ENCODE measurements at regions of chr17 and their contacts with region 1.

Region 1: GRCh38 chr17:29807520-29808351 is 122.3 kb downstream of the SSH2 start:
- DNase-seq: no peak
- H3K4me3 ChIP-seq: no peak overlapping the region
- H3K27ac ChIP-seq: no peak overlapping the region
- H3K4me1 ChIP-seq: no peaks in the 10 kb centered on the region
- H3K27me3 ChIP-seq: no peaks in the 10 kb centered on the region
- CTCF ChIP-seq: peak; percentile 48 to 82 (median 76)
- POLR2A ChIP-seq: no peak

Region 2: DNA sequence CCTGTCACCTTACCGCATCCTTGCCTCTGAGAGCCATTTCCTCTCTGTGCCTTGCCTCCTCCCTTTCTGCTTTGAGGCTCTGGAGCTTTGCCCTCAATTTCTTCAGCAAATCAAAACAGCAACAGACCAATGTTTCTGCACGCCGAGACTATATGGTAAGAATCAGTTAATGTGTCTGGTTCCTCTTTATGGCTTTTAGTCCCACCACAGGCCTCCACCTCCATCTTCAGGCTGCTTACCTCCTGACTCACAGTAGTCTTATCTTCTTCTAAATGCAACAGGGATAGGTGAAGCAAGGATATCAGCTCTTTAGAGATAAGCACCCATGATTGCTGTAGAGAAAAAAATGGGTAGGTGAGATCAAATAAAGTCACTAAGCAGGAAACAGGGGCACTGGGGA is 1221.9 kb before region 1 on chr17:
- intact Hi-C with region 1: no loop called
- DNase-seq: no peak
- H3K4me3 ChIP-seq: no peak overlapping the region
- H3K27ac ChIP-seq: no peak overlapping the region
- H3K4me1 ChIP-seq: no peaks in the 10 kb centered on the region
- H3K27me3 ChIP-seq: no peaks in the 10 kb centered on the region
- CTCF ChIP-seq: no peak
- POLR2A ChIP-seq: no peak

Region 3: DNA sequence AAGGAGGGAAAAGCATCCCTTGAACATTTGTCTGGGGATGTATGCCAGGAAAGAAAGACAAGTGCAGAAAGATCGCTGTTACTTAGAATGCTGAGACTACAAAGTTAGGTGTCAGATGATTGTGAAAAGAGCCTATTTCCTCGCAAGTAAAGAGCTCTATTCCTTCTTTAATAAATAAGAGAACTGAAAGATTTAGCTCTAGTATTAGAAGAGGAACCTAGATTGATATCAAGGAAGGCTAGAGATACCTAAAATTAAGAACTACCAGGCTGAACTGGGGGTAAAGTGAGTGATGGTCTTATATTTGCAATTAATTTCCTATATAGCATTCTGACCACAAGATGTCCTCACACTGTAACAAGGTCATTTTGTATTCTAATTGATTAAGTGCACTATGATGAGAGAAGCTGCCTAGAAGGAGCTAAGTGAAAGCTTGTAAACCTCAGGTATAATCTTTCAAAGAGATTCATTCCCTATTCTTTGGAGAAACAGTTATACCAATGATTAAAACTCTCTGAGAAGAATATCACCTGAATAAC is 60.0 kb after region 1 on chr17:
- intact Hi-C with region 1: no loop called
- DNase-seq: no peak
- H3K4me3 ChIP-seq: no peak overlapping the region
- H3K27ac ChIP-seq: no peak overlapping the region
- H3K4me1 ChIP-seq: peaks cover 0 to 19% (median 0%) of the 10 kb centered on the region in 3 donors
- H3K27me3 ChIP-seq: no peaks in the 10 kb centered on the region
- CTCF ChIP-seq: peak in 1 of 6 experiments; percentile 14
- POLR2A ChIP-seq: no peak

Region 4: GRCh38 chr17:29931231-29931932 is 123.6 kb after region 1 on chr17:
- intact Hi-C with region 1: loop called (anchors 5 kb)
- DNase-seq: peak; percentile 17
- H3K4me3 ChIP-seq: peak overlapping the region in 3 of 4 donors; percentile 93 to 99 (median 93)
- H3K27ac ChIP-seq: peak overlapping the region in 1 of 4 donors; percentile 27
- H3K4me1 ChIP-seq: peaks cover 4 to 42% (median 18%) of the 10 kb centered on the region in 3 donors
- H3K27me3 ChIP-seq: no peaks in the 10 kb centered on the region
- CTCF ChIP-seq: peak; percentile 78 to 93 (median 88)
- POLR2A ChIP-seq: no peak